Activated CD4-positive, alpha-beta memory T cell treated with anti-CD3 and anti-CD28 coated beads, Interleukin-2, amount 10 ng/mL, durations not matched to agents 7 days and 5 days (primary cell): ENCODE measurements at regions of chr7 and their contacts with region 1.

Region 1: GRCh38 chr7:35593896-35594295 is 101.0 kb downstream of the HERPUD2 start:
- DNase-seq: peak; percentile 21
- H3K4me3 Mint-ChIP-seq: no peak overlapping the region
- H3K27ac Mint-ChIP-seq: no peak overlapping the region
- H3K4me1 Mint-ChIP-seq: peaks cover 6% of the 10 kb centered on the region
- H3K27me3 Mint-ChIP-seq: no peaks in the 10 kb centered on the region

Region 2: DNA sequence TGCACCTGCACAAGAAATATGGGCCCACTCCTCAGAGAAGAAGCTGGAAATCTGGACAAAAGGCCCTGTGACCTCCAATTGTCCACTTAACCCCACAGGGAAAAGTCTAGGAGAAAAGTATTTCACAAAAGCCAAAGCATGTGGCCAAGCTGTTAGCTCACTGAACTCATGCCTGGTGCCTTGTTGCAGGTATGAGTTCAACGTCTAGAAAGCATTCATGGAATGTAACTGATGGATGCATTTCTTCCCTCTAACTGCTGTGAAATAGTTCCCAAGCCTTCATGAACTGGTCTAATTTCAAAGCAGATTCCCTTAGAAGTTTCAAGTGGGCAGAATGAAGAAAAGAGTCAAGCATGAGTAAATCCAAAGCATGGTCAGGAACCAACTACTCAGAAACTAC is 15.4 kb before region 1 on chr7:
- CTCF ChIA-PET with region 1: interaction called, 13 read pairs
- POLR2A ChIA-PET with region 1: no interaction called
- DNase-seq: no peak
- H3K4me3 Mint-ChIP-seq: no peak overlapping the region
- H3K27ac Mint-ChIP-seq: no peak overlapping the region
- H3K4me1 Mint-ChIP-seq: no peaks in the 10 kb centered on the region
- H3K27me3 Mint-ChIP-seq: peaks cover 6% of the 10 kb centered on the region